Upper lobe of right lung (tissue), 1 donor: ENCODE measurements at regions of chr2 and their contacts with region 1.

Region 1: GRCh38 chr2:134118279-134119116 is 135.4 kb upstream of the MGAT5 start:
- DNase-seq: peak; percentile 76
- ATAC-seq: peak; percentile 70
- H3K4me3 ChIP-seq: no peak overlapping the region
- H3K27ac ChIP-seq: peak overlapping the region; percentile 86
- H3K4me1 ChIP-seq: peaks cover 27% of the 10 kb centered on the region
- H3K27me3 ChIP-seq: no peaks in the 10 kb centered on the region
- CTCF ChIP-seq: peak; percentile 82

Region 2: DNA sequence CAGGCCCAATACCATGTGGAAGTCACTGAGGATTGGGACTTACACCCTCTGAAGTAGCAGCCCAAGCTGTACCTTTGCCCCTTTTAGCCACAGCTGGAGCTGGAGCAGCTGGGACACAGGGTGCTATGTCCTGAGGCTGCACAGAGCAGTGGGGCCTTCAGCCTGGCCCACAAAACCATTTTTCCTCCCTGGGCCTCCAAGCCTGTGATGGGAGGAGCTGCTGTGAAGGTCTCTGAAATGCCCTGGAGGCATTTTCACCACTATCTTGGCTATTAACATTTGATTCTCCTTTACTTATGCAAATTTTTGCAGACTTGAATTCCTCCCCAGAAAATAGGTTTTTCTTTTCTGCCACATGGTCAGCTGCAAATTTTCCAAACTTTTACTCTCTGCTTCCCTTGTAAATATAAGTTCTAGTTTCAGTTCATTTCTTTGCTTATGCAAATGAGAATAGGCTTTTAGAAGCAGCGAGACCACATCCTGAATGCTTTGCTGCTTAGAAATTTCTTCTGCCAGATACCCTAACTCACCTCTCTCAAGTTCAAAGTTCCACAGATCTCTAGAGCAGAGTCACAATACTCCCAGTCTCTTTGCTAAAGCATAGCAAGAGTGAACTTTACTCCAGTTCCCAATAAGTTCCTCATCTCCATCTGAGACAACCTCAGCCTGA is 78.5 kb before region 1 on chr2:
- intact Hi-C with region 1: no loop called
- DNase-seq: no peak
- ATAC-seq: no peak
- H3K4me3 ChIP-seq: no peak overlapping the region
- H3K27ac ChIP-seq: no peak overlapping the region
- H3K4me1 ChIP-seq: no peaks in the 10 kb centered on the region
- H3K27me3 ChIP-seq: no peaks in the 10 kb centered on the region
- CTCF ChIP-seq: no peak

Region 3: GRCh38 chr2:134193006-134193405 is 74.5 kb after region 1 on chr2:
- intact Hi-C with region 1: loop called (anchors 10 kb)
- DNase-seq: no peak
- ATAC-seq: no peak
- H3K4me3 ChIP-seq: no peak overlapping the region
- H3K27ac ChIP-seq: no peak overlapping the region
- H3K4me1 ChIP-seq: peaks cover 11% of the 10 kb centered on the region
- H3K27me3 ChIP-seq: no peaks in the 10 kb centered on the region
- CTCF ChIP-seq: no peak

Region 4: DNA sequence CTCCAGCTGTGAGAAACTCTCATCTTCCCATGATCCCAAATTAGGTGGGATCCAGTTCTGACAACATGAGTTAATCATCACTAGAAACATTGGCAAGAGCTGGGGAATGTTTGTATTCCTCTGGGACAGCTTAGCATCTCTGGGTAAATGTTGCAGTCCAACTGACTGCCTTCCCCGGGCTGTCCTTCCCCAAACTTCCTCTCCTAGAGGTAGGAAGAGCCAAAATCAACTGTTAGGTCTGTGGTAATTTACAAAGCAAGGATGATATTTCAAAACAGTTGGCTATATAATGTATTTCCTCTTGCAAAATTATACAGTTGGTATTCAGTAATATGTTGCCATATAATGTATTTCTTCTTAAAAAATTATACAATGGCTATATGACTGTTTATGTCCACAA is 283.9 kb after region 1 on chr2:
- intact Hi-C with region 1: loop called (anchors 10 kb)
- DNase-seq: no peak
- ATAC-seq: peak; percentile 47
- H3K4me3 ChIP-seq: no peak overlapping the region
- H3K27ac ChIP-seq: no peak overlapping the region
- H3K4me1 ChIP-seq: no peaks in the 10 kb centered on the region
- H3K27me3 ChIP-seq: no peaks in the 10 kb centered on the region
- CTCF ChIP-seq: no peak